Endothelial cell of umbilical vein (primary cell): ENCODE measurements at regions of chr2 and their contacts with region 1.

Region 1: DNA sequence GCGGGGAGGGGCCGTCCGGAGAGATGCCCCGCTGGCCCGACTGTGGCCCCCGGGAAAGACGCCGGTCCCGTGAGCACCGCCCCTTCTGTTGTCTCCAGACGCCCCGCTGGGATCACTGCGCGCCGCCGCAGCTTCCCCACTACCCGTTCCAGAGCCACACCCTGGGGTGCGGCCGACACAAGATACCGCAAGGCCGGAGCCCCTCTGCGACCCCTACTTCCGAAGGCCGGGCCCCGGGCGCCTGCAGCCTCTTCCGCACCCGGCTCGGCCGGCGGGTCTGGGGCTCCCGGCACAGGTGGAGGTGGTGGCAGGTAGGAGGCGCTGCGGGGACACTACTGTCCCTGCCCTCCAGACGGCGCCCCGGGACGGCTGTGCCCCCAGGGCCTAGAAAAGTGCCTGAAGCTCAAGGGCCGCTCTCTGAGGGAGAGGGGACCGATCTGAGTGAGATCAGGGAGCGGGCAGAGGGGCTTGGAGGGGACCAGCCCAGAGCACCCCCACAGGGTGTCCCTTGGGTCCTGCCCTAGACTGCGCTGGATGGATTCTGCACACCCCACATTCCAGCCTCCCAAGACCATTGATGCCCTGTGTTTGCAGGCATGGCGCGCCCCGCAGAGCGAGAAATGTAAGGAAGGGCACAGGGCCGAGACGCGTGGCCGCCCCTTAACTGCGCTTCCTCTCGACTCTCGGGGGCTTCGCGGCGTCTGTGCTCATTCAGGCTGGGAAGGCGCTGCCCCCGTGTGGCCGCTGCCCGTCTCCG is 80.0 kb downstream of the GFPT1 start:
- DNase-seq: peak; percentile 76
- H3K4me3 ChIP-seq: peak overlapping the region; percentile 17 to 42 (median 24)
- H3K27ac ChIP-seq: peak overlapping the region; percentile 69
- H3K4me1 ChIP-seq: peaks cover 9% of the 10 kb centered on the region
- H3K27me3 ChIP-seq: no peaks in the 10 kb centered on the region
- CTCF ChIP-seq: peak; percentile 84 to 98
- POLR2A ChIP-seq: peak; percentile 15

Region 2: GRCh38 chr2:68943581-68944568 is 363.1 kb before region 1 on chr2:
- CTCF ChIA-PET with region 1: interaction called, 12 read pairs
- POLR2A ChIA-PET with region 1: no interaction called
- dilution Hi-C with region 1: no loop called
- intact Hi-C with region 1: loop called (anchors 1 kb)
- DNase-seq: peak; percentile 64
- H3K4me3 ChIP-seq: no peak overlapping the region
- H3K27ac ChIP-seq: no peak overlapping the region
- H3K4me1 ChIP-seq: no peaks in the 10 kb centered on the region
- H3K27me3 ChIP-seq: peaks cover 6 to 29% of the 10 kb centered on the region in 2 experiments
- CTCF ChIP-seq: peak; percentile 70 to 71
- POLR2A ChIP-seq: no peak

Region 3: DNA sequence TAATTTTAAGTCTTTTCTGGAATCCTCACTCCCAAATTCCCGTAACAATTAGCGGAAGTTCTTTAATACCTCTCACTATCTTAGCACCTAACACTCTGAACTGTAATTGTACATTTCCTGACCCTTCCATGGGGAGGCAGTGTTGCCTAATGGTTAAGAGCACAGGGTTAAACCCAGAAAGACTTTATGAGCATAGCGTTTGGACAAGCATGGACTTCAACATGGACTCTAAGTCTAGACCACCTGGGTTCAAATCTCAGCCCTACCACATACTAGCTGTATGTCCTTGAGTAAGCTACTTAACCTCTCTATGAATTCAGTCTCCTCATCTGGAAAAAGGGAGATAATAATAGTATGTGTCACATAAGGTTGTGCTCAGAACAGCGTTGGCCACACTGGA is 281.0 kb before region 1 on chr2:
- CTCF ChIA-PET with region 1: interaction called, 38 read pairs
- POLR2A ChIA-PET with region 1: interaction called, 8 read pairs
- dilution Hi-C with region 1: no loop called
- intact Hi-C with region 1: loop called (anchors 1 kb)
- DNase-seq: peak; percentile 76
- H3K4me3 ChIP-seq: no peak overlapping the region
- H3K27ac ChIP-seq: no peak overlapping the region
- H3K4me1 ChIP-seq: peaks cover 3% of the 10 kb centered on the region
- H3K27me3 ChIP-seq: peaks cover 0 to 4% of the 10 kb centered on the region in 2 experiments
- CTCF ChIP-seq: peak; percentile 51 to 57
- POLR2A ChIP-seq: no peak

Region 4: GRCh38 chr2:69082430-69082997 is 224.5 kb before region 1 on chr2:
- CTCF ChIA-PET with region 1: interaction called, 5 read pairs
- POLR2A ChIA-PET with region 1: no interaction called
- dilution Hi-C with region 1: no loop called
- intact Hi-C with region 1: loop called (anchors 2 kb)
- DNase-seq: peak; percentile 87
- H3K4me3 ChIP-seq: no peak overlapping the region
- H3K27ac ChIP-seq: peak overlapping the region; percentile 47
- H3K4me1 ChIP-seq: peaks cover 20% of the 10 kb centered on the region
- H3K27me3 ChIP-seq: no peaks in the 10 kb centered on the region
- CTCF ChIP-seq: no peak
- POLR2A ChIP-seq: no peak

Region 5: DNA sequence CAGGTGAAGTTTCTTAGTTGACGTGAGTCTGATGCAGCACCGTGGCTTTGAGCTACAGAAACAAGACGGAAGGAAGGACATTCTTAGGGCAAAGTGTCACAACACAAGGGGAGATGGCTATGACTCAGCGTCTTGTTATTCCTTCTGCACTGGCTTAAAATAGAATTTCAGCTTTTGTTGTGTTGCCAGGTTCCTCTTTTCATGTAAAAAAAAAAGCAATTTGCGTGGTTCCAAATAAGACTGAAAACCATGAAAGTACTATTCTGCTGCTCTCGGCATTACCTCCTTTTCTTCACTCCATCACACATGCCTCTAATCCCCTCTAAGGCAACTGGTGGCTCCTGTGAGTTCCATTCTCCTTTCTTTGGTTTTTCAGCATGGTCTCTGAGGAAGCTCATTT is 143.9 kb before region 1 on chr2:
- CTCF ChIA-PET with region 1: interaction called, 7 read pairs
- POLR2A ChIA-PET with region 1: no interaction called
- dilution Hi-C with region 1: no loop called
- intact Hi-C with region 1: loop called (anchors 1 kb)
- DNase-seq: peak; percentile 68
- H3K4me3 ChIP-seq: no peak overlapping the region
- H3K27ac ChIP-seq: peak overlapping the region; percentile 95
- H3K4me1 ChIP-seq: peaks cover 40% of the 10 kb centered on the region
- H3K27me3 ChIP-seq: no peaks in the 10 kb centered on the region
- CTCF ChIP-seq: no peak
- POLR2A ChIP-seq: no peak

Region 6: DNA sequence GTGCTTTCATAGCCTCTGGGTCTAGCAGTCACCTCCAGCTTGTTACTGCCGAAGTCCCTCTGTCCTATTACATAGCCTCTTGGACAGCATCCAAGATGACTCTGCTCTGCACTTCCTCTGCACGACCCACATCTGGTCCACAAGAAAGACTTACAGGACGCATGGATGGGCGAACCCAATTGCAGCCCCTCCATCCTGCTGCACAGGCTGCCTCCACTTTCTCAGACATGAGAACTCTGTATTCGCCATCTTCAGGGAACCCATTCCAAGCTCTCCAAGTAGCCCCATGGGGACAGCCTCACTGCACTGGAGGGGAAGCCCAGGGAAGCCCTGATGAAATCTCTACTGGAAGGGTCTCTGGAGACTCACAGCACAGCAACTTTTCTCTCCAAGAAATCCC is 92.1 kb before region 1 on chr2:
- CTCF ChIA-PET with region 1: interaction called, 5 read pairs
- POLR2A ChIA-PET with region 1: no interaction called
- dilution Hi-C with region 1: no loop called
- intact Hi-C with region 1: loop called (anchors 2 kb)
- DNase-seq: peak; percentile 70
- H3K4me3 ChIP-seq: no peak overlapping the region
- H3K27ac ChIP-seq: peak overlapping the region; percentile 38
- H3K4me1 ChIP-seq: peaks cover 17% of the 10 kb centered on the region
- H3K27me3 ChIP-seq: no peaks in the 10 kb centered on the region
- CTCF ChIP-seq: no peak
- POLR2A ChIP-seq: no peak

Region 7: DNA sequence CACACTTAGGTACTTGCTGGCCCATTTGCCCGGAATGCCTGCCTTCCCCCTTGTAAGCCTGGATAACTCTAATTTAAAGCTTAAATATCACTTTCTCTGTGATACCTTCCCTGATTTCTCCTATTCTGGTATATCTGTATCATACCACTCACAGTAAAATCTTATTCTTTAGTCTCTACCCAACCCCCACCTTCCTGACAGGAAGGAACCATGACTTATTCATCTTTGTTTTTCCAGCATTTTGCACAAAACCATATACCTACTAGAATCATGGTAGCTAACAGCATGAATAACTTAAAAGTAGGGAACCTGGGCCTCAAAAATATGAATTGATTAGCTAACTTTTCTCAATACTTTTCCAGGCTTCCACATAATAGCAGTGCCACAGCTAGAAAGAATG is 31.5 kb before region 1 on chr2:
- CTCF ChIA-PET with region 1: interaction called, 10 read pairs
- POLR2A ChIA-PET with region 1: no interaction called
- dilution Hi-C with region 1: no loop called
- intact Hi-C with region 1: loop called (anchors 2 kb)
- DNase-seq: peak; percentile 75
- H3K4me3 ChIP-seq: peak overlapping the region in 1 of 3 experiments; percentile 52
- H3K27ac ChIP-seq: peak overlapping the region; percentile 89
- H3K4me1 ChIP-seq: peaks cover 19% of the 10 kb centered on the region
- H3K27me3 ChIP-seq: no peaks in the 10 kb centered on the region
- CTCF ChIP-seq: no peak
- POLR2A ChIP-seq: no peak